Activated naive CD4-positive, alpha-beta T cell treated with anti-CD3 and anti-CD28 coated beads for 36 hours (primary cell): ENCODE measurements at regions of chr9 and their contacts with region 1.

Region 1: GRCh38 chr9:127734747-127735529 is at the start of gene TOR2A:
- DNase-seq: peak; percentile 98
- H3K4me3 Mint-ChIP-seq: peak within 1 kb of the TSS; percentile 78
- H3K27ac Mint-ChIP-seq: peak within 1 kb of the TSS; percentile 86
- H3K4me1 Mint-ChIP-seq: peaks cover 13% of the 10 kb centered on the region
- H3K27me3 Mint-ChIP-seq: no peaks in the 10 kb centered on the region
- total RNA-seq, gene TOR2A: 11.8 to 12.7 TPM

Region 2: DNA sequence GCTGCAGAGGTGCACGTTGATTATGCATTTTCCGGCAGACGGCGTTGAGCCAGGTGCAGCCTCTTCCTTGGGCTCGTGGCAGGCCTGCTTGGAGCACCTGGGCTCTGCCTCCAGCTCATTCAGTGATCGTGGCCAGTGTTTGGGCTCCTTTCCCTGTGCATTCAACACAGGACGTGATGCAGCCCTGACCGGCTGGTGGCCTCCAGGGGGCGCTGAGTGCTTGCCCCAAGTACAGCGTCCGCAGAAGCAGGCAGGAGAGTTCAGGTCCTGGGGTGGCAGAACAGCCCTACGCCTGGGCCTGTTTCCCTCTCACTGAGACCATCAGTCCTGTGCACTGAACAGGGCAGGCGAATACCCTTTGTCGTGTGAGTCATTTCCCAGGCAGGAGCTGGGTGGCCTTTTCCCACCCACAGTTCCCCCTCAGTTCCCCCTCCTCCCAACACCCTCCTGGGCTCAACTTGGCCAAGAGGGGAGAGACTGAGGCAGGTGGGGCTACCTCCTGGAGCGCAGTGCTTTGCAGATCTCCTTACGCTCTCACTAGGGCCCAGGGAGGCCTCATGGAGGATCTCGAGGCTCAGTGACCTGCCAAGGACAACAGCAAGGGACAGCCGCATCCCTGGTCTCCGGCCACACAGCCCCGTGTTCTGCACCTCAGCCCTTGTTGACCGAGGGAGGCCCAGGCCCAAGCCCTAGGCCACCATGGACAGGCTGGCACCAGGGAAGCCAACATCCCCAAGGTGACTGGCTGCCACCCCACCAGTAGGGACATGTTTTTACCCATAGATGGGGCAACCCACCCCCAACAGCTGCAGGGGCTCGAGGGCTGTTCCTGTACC is 230.8 kb before region 1 on chr9:
- CTCF ChIA-PET with region 1: interaction called, 8 read pairs
- intact Hi-C with region 1: loop called (anchors 1 kb)
- DNase-seq: peak; percentile 88
- H3K4me3 Mint-ChIP-seq: no peak overlapping the region
- H3K27ac Mint-ChIP-seq: no peak overlapping the region
- H3K4me1 Mint-ChIP-seq: no peaks in the 10 kb centered on the region
- H3K27me3 Mint-ChIP-seq: no peaks in the 10 kb centered on the region

Region 3: DNA sequence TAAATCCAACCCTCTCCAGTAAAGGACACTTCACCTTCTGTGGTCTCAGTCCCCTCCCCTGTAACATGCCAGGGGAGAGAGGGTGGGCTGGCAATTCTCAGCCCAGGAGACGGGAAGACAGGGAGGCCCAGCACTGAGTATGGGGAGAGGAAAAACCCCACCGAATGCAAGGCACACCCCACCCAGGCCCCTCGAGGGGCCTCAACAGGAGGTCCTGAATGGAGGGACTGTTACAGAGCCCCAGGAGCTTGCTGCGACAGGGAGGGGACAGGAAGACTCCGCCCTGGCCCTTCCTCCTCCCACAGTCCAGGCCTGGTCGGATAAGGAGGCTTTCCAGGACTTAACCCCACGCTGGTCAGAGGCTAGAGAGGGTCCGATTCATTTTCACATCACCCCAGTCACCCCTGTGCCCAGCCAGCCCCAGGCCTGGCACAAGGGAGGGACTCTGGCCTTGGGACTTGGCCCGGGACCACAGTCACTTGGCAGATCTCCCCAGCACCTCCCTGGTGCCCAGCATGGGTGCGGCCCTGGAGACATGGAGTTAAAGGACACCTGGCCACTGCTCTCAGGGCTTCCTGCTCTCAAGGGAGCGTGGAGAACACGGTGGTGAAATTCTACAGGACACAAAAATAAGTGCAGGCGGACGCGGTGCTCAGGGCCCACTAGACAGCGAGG is 167.7 kb before region 1 on chr9:
- CTCF ChIA-PET with region 1: no interaction called
- intact Hi-C with region 1: no loop called
- DNase-seq: no peak
- H3K4me3 Mint-ChIP-seq: peak overlapping the region; percentile 52
- H3K27ac Mint-ChIP-seq: no peak overlapping the region
- H3K4me1 Mint-ChIP-seq: peaks cover 18% of the 10 kb centered on the region
- H3K27me3 Mint-ChIP-seq: no peaks in the 10 kb centered on the region

Region 4: GRCh38 chr9:127611899-127612790 is 122.8 kb before region 1 on chr9 and contains the start of gene STXBP1:
- CTCF ChIA-PET with region 1: interaction called, 3 read pairs
- intact Hi-C with region 1: loop called (anchors 1 kb)
- DNase-seq: peak; percentile 86
- H3K4me3 Mint-ChIP-seq: peak within 1 kb of the TSS; percentile 94
- H3K27ac Mint-ChIP-seq: no peak within 1 kb of the TSS
- H3K4me1 Mint-ChIP-seq: peaks cover 21% of the 10 kb centered on the region
- H3K27me3 Mint-ChIP-seq: peaks cover 15% of the 10 kb centered on the region
- total RNA-seq, gene STXBP1: 17.4 to 17.8 TPM

Region 5: DNA sequence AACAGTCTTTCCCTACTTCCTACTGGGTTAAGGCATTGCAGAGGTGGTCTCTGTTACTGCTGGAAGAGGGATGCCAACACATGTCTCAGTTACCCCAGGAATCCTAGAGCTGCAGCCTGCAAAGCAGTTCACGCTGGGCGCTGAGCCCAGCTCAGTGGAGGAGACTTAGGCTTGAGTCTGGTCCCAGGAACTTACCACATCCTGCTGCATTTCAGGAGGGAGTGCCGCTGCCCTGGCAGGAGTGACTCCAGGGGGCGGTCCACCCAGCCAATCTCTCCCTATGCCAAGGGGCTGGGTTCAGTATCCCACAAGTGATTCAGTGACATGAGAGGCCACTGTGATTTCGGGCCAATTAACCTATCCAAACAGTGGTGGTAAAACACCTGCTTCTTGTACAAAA is 11.5 kb before region 1 on chr9:
- CTCF ChIA-PET with region 1: interaction called, 10 read pairs
- intact Hi-C with region 1: no loop called
- DNase-seq: no peak
- H3K4me3 Mint-ChIP-seq: no peak overlapping the region
- H3K27ac Mint-ChIP-seq: no peak overlapping the region
- H3K4me1 Mint-ChIP-seq: peaks cover 22% of the 10 kb centered on the region
- H3K27me3 Mint-ChIP-seq: no peaks in the 10 kb centered on the region

Region 6: DNA sequence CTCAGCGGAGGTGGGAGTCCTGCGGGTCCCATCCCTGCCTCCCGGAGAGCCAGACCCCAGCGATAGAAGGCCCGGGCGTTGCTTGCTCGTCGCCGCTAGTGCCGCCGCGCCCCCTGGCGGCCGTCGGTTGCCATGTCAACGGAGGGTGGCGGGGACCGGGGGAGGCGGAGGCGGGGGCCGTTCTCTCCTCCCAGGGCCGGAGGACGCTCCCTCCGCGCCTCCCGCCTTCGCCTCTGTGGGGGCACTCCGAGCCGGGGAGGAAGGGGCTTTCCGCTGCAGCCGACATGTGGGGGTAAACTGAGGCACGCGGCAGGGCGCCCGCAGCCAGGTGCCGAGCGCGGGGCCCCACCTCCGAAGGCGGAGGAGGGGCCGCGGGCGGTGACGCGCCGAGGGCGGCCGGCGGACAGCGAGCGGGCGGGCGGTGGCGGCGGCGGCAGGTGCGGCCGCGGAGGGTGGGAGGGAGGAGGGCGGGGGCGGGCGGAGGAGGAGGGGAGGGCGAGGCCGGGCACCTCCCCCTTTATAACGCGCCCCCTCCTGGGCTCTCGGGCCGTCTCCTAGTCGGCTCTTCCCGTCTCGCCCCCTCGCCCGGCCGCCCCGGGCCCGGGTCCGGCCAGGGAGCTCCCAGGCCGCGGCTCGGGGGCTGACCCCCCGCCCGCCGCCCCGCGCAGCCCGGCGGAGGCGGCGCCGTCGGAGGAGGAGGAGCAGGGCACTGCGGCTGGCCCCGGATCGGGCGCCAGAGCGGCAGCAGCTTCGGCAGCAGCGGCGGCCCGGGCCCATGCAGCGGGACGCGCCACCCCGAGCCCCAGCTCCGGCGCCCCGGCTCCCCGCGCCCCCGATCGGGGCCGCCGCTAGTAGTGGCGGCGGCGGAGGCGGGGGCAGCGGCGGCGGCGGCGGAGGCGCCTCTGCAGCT is 50.3 kb after region 1 on chr9:
- CTCF ChIA-PET with region 1: interaction called, 52 read pairs
- intact Hi-C with region 1: loop called (anchors 1 kb)
- DNase-seq: peak; percentile 91
- H3K4me3 Mint-ChIP-seq: peak overlapping the region; percentile 95
- H3K27ac Mint-ChIP-seq: peak overlapping the region; percentile 91
- H3K4me1 Mint-ChIP-seq: peaks cover 68% of the 10 kb centered on the region
- H3K27me3 Mint-ChIP-seq: no peaks in the 10 kb centered on the region

Region 7: DNA sequence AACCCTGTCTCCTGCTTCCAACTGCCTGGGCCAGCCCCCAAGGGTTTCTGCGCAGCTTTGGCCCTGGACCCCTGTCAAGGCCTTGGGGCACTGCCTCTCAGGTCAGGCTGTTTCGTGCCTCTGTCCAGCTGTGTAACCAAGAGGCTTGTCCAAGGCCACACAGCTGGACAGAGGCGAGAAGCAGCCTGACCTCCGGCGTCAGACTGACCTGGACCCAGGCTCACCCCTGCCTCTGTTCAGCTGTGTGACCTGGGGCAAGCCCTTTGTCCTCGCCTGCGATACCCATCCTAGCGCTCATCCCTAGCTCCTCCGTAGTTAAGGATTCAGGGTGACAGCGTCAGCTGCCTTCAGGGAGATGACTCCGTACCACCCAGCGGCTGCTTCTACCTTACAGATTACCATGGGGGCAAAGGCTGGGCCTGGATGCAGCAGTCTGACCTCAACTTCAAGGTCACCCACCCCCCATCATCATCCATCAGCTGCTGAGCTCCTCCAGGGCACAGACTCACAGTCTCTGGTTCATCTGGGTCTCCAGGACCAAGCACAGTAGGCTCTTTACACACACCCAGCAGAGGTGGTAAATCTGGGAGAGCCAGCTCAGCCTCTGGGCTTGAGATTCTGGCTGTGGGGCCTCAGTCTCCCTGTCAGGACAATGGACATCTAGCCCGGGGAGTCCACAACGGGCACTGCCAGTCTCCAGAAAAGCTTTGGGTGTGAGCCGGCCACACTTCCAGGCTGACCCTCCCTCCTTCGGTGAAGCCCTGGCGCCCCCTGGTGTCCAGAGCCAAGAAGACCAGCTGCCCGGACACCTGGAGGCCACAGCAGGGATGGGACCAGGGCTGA is 134.6 kb after region 1 on chr9:
- CTCF ChIA-PET with region 1: interaction called, 27 read pairs
- intact Hi-C with region 1: loop called (anchors 1 kb)
- DNase-seq: peak; percentile 88
- H3K4me3 Mint-ChIP-seq: no peak overlapping the region
- H3K27ac Mint-ChIP-seq: no peak overlapping the region
- H3K4me1 Mint-ChIP-seq: peaks cover 14% of the 10 kb centered on the region
- H3K27me3 Mint-ChIP-seq: no peaks in the 10 kb centered on the region